Dendritic cell treated with granulocyte-macrophage colony-stimulating factor and Interleukin-4, amounts not matched to agents 40 ng/mL and 50 ng/mL, for 4 days (primary cell): ENCODE measurements at regions of chr7 and their contacts with region 1.

Region 1: GRCh38 chr7:99312316-99313203 is 13.1 kb upstream of the ARPC1A start:
- H3K4me3 Mint-ChIP-seq: no peak overlapping the region
- H3K27ac Mint-ChIP-seq: no peak overlapping the region
- H3K4me1 Mint-ChIP-seq: no peaks in the 10 kb centered on the region
- H3K27me3 Mint-ChIP-seq: peaks cover 8% of the 10 kb centered on the region

Region 2: GRCh38 chr7:99040104-99040958 is 272.2 kb before region 1 on chr7:
- intact Hi-C with region 1: loop called (anchors 1 kb)
- H3K4me3 Mint-ChIP-seq: no peak overlapping the region
- H3K27ac Mint-ChIP-seq: no peak overlapping the region
- H3K4me1 Mint-ChIP-seq: peaks cover 13% of the 10 kb centered on the region
- H3K27me3 Mint-ChIP-seq: no peaks in the 10 kb centered on the region

Region 3: GRCh38 chr7:99408379-99409191 is 96.0 kb after region 1 on chr7 and contains the starts of genes BUD31 and PDAP1:
- intact Hi-C with region 1: no loop called
- H3K4me3 Mint-ChIP-seq: peak within 1 kb of the TSS; percentile 97
- H3K27ac Mint-ChIP-seq: peak within 1 kb of the TSS; percentile 90
- H3K4me1 Mint-ChIP-seq: peaks cover 42% of the 10 kb centered on the region
- H3K27me3 Mint-ChIP-seq: no peaks in the 10 kb centered on the region